Activated CD4-positive, alpha-beta memory T cell treated with anti-CD3 and anti-CD28 coated beads, Interleukin-2, amount 10 ng/mL, durations not matched to agents 7 days and 5 days (primary cell): ENCODE measurements at regions of chr10 and their contacts with region 1.

Region 1: GRCh38 chr10:98446661-98447221 is at the start of gene HPS1:
- DNase-seq: peak; percentile 87
- H3K4me3 Mint-ChIP-seq: peak within 1 kb of the TSS; percentile 94
- H3K27ac Mint-ChIP-seq: peak within 1 kb of the TSS; percentile 84
- H3K4me1 Mint-ChIP-seq: peaks cover 44% of the 10 kb centered on the region
- H3K27me3 Mint-ChIP-seq: peaks cover 10% of the 10 kb centered on the region
- total RNA-seq, gene HPS1: 85.4 to 88.3 TPM

Region 2: DNA sequence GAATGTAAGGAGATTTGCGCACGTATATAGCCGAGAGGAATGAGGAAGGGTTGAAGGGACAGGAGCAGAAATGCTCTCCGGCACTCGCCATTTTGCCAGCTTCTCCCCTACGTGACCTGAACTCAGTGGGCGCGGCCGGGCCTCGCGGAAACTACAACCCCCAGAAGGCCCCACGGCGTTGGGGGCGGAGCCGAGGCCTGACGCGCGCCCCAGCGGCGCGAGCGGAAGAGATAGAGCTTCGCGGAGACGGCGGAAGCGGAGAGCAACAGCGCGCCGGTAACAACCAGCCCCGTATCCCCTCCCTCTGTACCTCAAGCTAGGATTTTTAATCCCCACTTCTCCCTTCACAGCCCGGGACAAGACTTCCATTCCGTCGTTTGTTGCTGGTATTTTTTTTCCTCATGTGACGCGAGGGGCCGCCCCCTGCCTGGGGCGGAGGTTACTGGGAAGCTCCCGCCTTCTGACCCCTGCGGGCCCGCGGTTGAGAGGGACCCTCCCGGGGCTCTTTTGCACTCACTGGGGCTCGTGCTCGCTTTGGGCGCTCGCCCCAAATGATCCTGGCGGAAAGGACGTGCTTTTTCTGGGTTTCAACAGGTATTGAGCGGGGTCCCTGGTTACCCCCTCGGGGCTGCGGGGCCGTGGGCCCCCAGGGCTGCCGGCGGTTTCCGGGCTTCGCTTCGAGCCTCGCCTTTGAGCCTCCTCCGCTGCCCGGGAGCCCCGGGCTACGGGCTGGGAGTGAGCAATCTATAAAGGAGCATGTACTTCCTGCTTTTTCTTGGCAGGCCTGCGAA is 312.1 kb before region 1 on chr10 and contains the start of gene R3HCC1L:
- CTCF ChIA-PET with region 1: no interaction called
- POLR2A ChIA-PET with region 1: interaction called, 11 read pairs
- DNase-seq: peak; percentile 96
- H3K4me3 Mint-ChIP-seq: peak within 1 kb of the TSS; percentile 84
- H3K27ac Mint-ChIP-seq: peak within 1 kb of the TSS; percentile 77
- H3K4me1 Mint-ChIP-seq: peaks cover 46% of the 10 kb centered on the region
- H3K27me3 Mint-ChIP-seq: peaks cover 2% of the 10 kb centered on the region
- total RNA-seq, gene R3HCC1L: 18.3 to 19.0 TPM